Endothelial cell of umbilical vein (primary cell): ENCODE measurements at regions of chr13 and their contacts with region 1.

Region 1: GRCh38 chr13:78137404-78138142 is 218.9 kb upstream of the EDNRB start:
- DNase-seq: peak; percentile 71
- H3K4me3 ChIP-seq: no peak overlapping the region
- H3K27ac ChIP-seq: no peak overlapping the region
- H3K4me1 ChIP-seq: peaks cover 4% of the 10 kb centered on the region
- H3K27me3 ChIP-seq: peaks cover 0 to 2% of the 10 kb centered on the region in 2 experiments
- CTCF ChIP-seq: peak; percentile 55 to 61
- POLR2A ChIP-seq: no peak

Region 2: DNA sequence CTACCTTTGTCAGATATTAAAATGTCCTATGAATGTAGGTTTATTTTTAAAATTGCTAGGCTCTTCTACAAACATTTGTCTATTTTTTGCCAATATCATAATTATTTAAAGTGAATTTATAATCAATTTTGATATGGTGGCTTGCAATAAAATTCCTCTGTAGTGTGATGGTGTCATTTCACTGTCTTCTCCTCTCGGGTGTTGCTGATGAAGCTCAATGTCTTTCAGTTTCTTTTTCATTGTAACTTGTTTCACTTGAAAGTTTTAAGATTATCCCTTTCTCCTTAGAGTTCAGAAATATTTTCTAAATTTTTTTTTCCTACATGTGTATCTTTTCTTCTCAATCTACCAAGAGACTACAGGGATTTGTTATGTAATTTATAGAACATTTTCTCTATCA is 48.1 kb after region 1 on chr13:
- CTCF ChIA-PET with region 1: no interaction called
- POLR2A ChIA-PET with region 1: no interaction called
- dilution Hi-C with region 1: no loop called
- intact Hi-C with region 1: loop called (anchors 5 kb)
- DNase-seq: no peak
- H3K4me3 ChIP-seq: no peak overlapping the region
- H3K27ac ChIP-seq: no peak overlapping the region
- H3K4me1 ChIP-seq: no peaks in the 10 kb centered on the region
- H3K27me3 ChIP-seq: peaks cover 0 to 2% of the 10 kb centered on the region in 2 experiments
- CTCF ChIP-seq: no peak
- POLR2A ChIP-seq: no peak

Region 3: GRCh38 chr13:78317030-78317429 is 179.5 kb after region 1 on chr13:
- CTCF ChIA-PET with region 1: interaction called, 8 read pairs
- POLR2A ChIA-PET with region 1: no interaction called
- dilution Hi-C with region 1: no loop called
- intact Hi-C with region 1: loop called (anchors 5 kb)
- DNase-seq: no peak
- H3K4me3 ChIP-seq: no peak overlapping the region
- H3K27ac ChIP-seq: no peak overlapping the region
- H3K4me1 ChIP-seq: peaks cover 6% of the 10 kb centered on the region
- H3K27me3 ChIP-seq: no peaks in the 10 kb centered on the region
- CTCF ChIP-seq: peak in 1 of 2 donors; percentile 16
- POLR2A ChIP-seq: no peak

Region 4: DNA sequence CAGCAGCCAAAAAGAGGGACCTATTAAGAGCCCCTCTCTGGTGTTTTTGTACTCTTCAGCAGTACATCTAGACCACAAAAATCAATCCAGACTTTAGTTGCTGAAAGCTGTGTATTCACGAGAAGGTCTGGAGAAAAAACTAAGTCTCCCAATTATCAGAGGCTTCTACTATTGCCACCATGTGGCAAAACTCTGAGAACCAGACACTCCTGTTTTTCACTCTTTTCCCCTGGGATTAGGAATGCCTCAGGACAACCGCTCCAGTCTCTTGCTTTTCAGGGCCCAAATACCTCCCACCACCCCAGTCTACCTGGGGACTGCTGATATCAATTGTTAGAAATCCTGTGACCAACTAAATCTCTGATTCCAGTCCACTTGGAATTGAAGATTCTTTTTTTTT is 551.4 kb after region 1 on chr13:
- CTCF ChIA-PET with region 1: interaction called, 5 read pairs
- POLR2A ChIA-PET with region 1: no interaction called
- dilution Hi-C with region 1: no loop called
- intact Hi-C with region 1: loop called (anchors 10 kb)
- DNase-seq: peak; percentile 18
- H3K4me3 ChIP-seq: no peak overlapping the region
- H3K27ac ChIP-seq: no peak overlapping the region
- H3K4me1 ChIP-seq: no peaks in the 10 kb centered on the region
- H3K27me3 ChIP-seq: no peaks in the 10 kb centered on the region
- CTCF ChIP-seq: peak in 1 of 2 donors; percentile 29
- POLR2A ChIP-seq: no peak

Region 5: GRCh38 chr13:78806457-78806856 is 668.9 kb after region 1 on chr13:
- CTCF ChIA-PET with region 1: interaction called, 4 read pairs
- POLR2A ChIA-PET with region 1: no interaction called
- dilution Hi-C with region 1: no loop called
- intact Hi-C with region 1: loop called (anchors 1 kb)
- DNase-seq: peak; percentile 11
- H3K4me3 ChIP-seq: no peak overlapping the region
- H3K27ac ChIP-seq: no peak overlapping the region
- H3K4me1 ChIP-seq: no peaks in the 10 kb centered on the region
- H3K27me3 ChIP-seq: no peaks in the 10 kb centered on the region
- CTCF ChIP-seq: peak; percentile 5 to 51
- POLR2A ChIP-seq: no peak

Region 6: DNA sequence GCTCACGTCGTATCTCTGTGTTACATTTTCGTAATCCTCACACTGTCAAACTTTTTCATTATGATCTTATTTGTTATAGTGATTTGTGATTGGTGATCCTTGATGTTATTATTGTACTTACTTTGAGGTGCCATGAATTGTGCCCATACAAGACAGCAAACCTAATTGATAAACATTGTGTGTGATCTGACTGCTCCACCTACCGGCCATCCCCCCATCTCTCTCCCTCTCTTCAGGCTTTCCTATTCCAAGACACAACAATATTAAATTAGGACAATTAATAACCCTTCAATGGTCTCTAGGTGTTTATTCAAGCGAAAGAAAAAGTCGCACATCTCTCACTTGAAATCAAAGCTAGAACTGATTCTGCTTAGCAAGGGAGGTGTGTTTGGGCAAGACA is 919.1 kb after region 1 on chr13:
- CTCF ChIA-PET with region 1: no interaction called
- POLR2A ChIA-PET with region 1: no interaction called
- dilution Hi-C with region 1: no loop called
- intact Hi-C with region 1: loop called (anchors 5 kb)
- DNase-seq: no peak
- H3K4me3 ChIP-seq: no peak overlapping the region
- H3K27ac ChIP-seq: no peak overlapping the region
- H3K4me1 ChIP-seq: no peaks in the 10 kb centered on the region
- H3K27me3 ChIP-seq: no peaks in the 10 kb centered on the region
- CTCF ChIP-seq: no peak
- POLR2A ChIP-seq: no peak

Region 7: GRCh38 chr13:79541426-79542049 is 1404.0 kb after region 1 on chr13:
- CTCF ChIA-PET with region 1: interaction called, 6 read pairs
- POLR2A ChIA-PET with region 1: no interaction called
- dilution Hi-C with region 1: no loop called
- intact Hi-C with region 1: loop called (anchors 5 kb)
- DNase-seq: peak; percentile 79
- H3K4me3 ChIP-seq: no peak overlapping the region
- H3K27ac ChIP-seq: no peak overlapping the region
- H3K4me1 ChIP-seq: no peaks in the 10 kb centered on the region
- H3K27me3 ChIP-seq: no peaks in the 10 kb centered on the region
- CTCF ChIP-seq: peak; percentile 33 to 50
- POLR2A ChIP-seq: no peak